ENCODE measurements at regions of chr2 and their contacts with region 1.

Region 1: DNA sequence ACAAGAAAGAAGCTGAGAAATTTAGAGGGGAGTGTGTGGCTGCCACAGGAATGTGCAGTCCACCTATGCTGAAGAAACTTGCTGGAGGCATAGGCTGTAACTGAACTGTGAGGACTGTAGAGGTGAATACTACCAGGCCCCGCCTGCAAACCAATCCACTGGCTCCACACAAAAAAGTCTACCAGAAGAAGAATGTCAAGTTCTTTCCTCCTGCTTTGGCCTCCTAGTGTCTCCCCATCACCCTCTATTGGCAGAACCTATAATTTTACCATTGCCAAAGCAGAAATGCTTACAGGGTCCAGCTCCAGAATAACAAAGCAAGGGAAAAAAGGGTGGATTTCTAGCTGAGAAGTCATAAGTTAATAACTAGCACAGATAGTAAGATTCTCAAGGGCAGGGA is 5.9 kb upstream of the ATP5MC3 start:
- DNase-seq: peak; percentile 21
- H3K4me3 Mint-ChIP-seq: no peak overlapping the region
- H3K27ac Mint-ChIP-seq: no peak overlapping the region
- H3K4me1 Mint-ChIP-seq: no peaks in the 10 kb centered on the region
- H3K27me3 Mint-ChIP-seq: peaks cover 12% of the 10 kb centered on the region

Region 2: DNA sequence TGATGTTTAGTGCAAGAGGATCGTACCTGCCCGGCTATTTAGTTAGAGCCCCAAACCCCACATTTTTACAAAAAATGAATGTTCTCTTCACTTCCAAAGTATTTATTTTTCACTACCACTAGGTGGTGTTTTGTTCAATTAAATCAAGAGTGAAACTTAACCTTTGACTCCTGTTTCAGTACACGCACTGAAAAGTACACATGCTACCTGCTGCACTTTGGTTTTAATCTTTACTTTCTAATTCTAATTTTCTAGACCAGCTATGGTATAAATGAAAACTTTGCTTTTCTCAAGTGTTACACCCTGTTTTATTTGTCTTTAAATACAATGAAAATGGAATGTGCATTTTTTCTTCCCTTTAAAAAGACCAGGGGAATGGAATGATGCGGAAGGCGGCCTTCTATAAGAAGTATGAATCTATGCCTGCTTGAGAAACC is 150.8 kb before region 1 on chr2:
- CTCF ChIA-PET with region 1: no interaction called
- intact Hi-C with region 1: loop called (anchors 1 kb)
- DNase-seq: no peak
- H3K4me3 Mint-ChIP-seq: no peak overlapping the region
- H3K27ac Mint-ChIP-seq: no peak overlapping the region
- H3K4me1 Mint-ChIP-seq: peaks cover 6% of the 10 kb centered on the region
- H3K27me3 Mint-ChIP-seq: no peaks in the 10 kb centered on the region

Region 3: DNA sequence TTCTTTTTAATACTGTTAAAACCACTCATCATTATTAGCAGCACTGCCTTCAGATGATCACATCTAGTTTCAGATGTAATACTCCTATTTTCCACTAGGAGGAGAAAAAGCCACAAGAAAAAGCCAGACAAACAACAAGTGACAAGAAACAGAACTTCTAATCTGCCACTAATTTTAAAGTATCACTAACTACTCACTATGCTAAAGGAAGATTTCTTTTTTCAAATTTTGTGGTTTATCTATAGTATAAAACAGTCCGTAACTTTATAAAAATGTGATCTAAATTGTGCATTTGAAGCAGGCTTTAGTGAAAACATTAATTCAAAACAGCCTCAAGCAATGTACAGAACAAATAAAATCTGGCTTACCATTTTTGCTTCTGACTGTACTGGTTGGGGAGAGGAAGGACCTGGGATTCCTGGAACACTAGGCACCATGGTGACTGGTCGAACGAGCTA is 76.1 kb before region 1 on chr2:
- CTCF ChIA-PET with region 1: no interaction called
- intact Hi-C with region 1: loop called (anchors 1 kb)
- DNase-seq: no peak
- H3K4me3 Mint-ChIP-seq: no peak overlapping the region
- H3K27ac Mint-ChIP-seq: no peak overlapping the region
- H3K4me1 Mint-ChIP-seq: peaks cover 3% of the 10 kb centered on the region
- H3K27me3 Mint-ChIP-seq: no peaks in the 10 kb centered on the region

Measured in activated naive CD4-positive, alpha-beta T cell treated with anti-CD3 and anti-CD28 coated beads for 36 hours (primary cell).